ENCODE measurements at regions of chr13 and their contacts with region 1.

Region 1: GRCh38 chr13:20713751-20714150 is 10.3 kb downstream of the IL17D start:
- DNase-seq: no peak
- ATAC-seq: no peak
- H3K4me3 ChIP-seq: no peak overlapping the region
- H3K27ac ChIP-seq: no peak overlapping the region
- H3K4me1 ChIP-seq: peaks cover 2 to 9% of the 10 kb centered on the region in 2 experiments; a peak in 4 of 5 replicates
- H3K27me3 ChIP-seq: peaks cover 0 to 7% of the 10 kb centered on the region in 2 experiments; a peak in 2 of 5 replicates
- CTCF ChIP-seq: no peak
- EP300 ChIP-seq: no peak
- POLR2A ChIP-seq: no peak
- RAD21 ChIP-seq: no peak

Region 2: DNA sequence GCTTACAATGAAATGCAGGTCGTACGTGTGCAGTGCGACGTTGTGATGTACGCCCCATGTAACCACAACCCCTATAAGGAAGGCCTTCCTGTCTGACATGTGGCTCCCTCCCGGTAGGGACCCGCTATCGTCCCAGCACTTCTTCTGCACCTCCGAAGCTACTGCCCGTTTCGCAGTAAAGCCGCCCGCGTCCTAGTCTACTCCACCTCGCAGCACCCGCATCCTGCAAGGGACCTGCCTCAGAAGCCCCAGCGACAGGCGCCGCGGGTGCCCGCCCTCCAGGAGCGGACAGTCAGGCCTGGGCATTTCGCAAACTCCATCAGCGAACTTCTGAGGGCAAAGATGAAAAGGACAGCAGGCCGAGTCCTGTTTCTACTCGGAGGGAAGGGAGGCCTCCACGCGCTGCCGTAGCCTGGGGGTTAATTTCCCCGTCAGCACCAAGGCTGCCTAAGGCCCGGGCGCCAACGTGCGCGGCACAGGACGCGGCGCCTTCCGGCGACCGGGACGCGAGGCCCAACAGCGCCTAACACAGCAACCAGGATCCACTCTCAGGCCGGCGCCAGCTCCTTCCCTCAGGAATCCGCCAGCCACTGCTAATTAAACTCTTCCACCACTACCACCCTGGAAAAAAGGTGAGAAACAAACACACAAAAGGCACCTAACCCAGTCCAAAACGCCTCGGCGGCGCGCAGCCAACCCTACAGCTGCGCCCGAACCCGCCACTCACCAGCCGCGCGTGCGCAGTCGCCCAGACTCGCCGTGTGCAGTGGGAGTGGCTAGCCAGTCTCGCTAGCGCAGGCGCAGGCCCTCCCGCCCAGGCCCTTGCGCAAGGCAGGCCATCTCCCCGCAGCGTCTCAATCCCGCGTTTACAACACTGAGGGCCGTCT is 59.7 kb after region 1 on chr13 and contains the start of gene EEF1AKMT1:
- CTCF ChIA-PET with region 1: no interaction called
- POLR2A ChIA-PET with region 1: no interaction called
- in situ Hi-C with region 1: no loop called
- intact Hi-C with region 1: loop called (anchors 5 kb)
- DNase-seq: peak; percentile 85 to 92 (median 88)
- ATAC-seq: peak; percentile 95
- H3K4me3 ChIP-seq: peak within 1 kb of the TSS; percentile 60
- H3K27ac ChIP-seq: peak within 1 kb of the TSS; percentile 95
- H3K4me1 ChIP-seq: peaks cover 5 to 13% of the 10 kb centered on the region in 2 experiments; a peak in 3 of 5 replicates
- H3K27me3 ChIP-seq: no peaks in the 10 kb centered on the region
- CTCF ChIP-seq: no peak
- EP300 ChIP-seq: no peak
- POLR2A ChIP-seq: peak; percentile 93
- RAD21 ChIP-seq: no peak
- polyA plus RNA-seq, gene EEF1AKMT1: 34.8 to 36.3 TPM

Region 3: DNA sequence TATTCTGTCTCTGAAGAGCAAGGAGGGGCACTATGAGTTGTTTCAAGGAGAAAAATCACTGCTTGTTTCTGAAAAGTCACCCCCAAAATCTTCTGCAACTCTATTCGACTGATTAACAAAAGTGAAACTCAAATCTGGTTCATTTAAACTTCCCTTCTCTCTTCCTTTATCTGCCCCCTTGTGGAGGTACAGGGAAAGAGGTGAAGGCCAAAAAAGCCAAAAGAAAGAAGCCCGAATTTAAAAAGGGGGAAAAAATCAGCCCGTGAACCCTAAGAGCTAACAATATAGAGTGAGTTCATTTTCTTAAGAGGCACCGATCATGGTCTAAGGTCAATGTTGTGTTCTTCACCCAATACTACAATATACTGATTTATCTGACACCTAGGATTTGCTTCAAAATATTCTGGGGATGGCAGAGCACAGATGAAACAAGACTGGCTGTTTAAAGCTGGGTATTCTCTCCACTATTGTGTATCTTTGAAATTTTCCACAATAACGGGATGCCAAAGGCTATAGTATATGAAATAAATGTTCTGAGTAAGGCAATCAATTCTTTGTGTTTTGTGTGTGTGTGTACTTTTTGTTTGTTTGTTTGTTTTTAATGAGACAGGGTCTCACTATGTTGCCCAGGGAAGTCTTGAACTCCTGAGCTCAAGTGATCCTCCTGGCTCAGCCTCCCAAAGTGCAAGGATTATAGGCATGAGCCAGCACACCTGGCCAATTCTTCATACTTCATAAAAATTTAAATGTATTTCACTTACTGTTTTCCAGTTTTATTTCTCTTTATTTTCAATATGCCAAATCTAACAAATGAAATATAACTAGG is 115.0 kb after region 1 on chr13:
- CTCF ChIA-PET with region 1: interaction called, 4 read pairs
- POLR2A ChIA-PET with region 1: no interaction called
- in situ Hi-C with region 1: no loop called
- intact Hi-C with region 1: loop called (anchors 2 kb)
- DNase-seq: peak in 2 of 4 experiments; percentile 22 to 47
- ATAC-seq: peak; percentile 59; the same call in 2 of the 3 replicates
- H3K4me3 ChIP-seq: no peak overlapping the region
- H3K27ac ChIP-seq: no peak overlapping the region
- H3K4me1 ChIP-seq: no peaks in the 10 kb centered on the region
- H3K27me3 ChIP-seq: no peaks in the 10 kb centered on the region
- CTCF ChIP-seq: peak; percentile 53 to 61 (median 57); a peak in 5 of 6 replicates
- EP300 ChIP-seq: no peak
- POLR2A ChIP-seq: no peak
- RAD21 ChIP-seq: peak; percentile 55 to 63

Region 4: GRCh38 chr13:20924758-20925394 is 211.1 kb after region 1 on chr13:
- CTCF ChIA-PET with region 1: interaction called, 8 read pairs
- POLR2A ChIA-PET with region 1: no interaction called
- in situ Hi-C with region 1: loop called (anchors 10 kb)
- intact Hi-C with region 1: loop called (anchors 2 kb)
- DNase-seq: peak; percentile 26 to 82 (median 33)
- ATAC-seq: peak; percentile 87
- H3K4me3 ChIP-seq: no peak overlapping the region
- H3K27ac ChIP-seq: no peak overlapping the region
- H3K4me1 ChIP-seq: no peaks in the 10 kb centered on the region
- H3K27me3 ChIP-seq: no peaks in the 10 kb centered on the region
- CTCF ChIP-seq: peak; percentile 62 to 77 (median 70)
- EP300 ChIP-seq: no peak
- POLR2A ChIP-seq: no peak
- RAD21 ChIP-seq: peak; percentile 61 to 83

Measured in K562 (cell line).